Right ventricle myocardium inferior (tissue), 1 donor: ENCODE measurements at regions of chr19 and their contacts with region 1.

Region 1: DNA sequence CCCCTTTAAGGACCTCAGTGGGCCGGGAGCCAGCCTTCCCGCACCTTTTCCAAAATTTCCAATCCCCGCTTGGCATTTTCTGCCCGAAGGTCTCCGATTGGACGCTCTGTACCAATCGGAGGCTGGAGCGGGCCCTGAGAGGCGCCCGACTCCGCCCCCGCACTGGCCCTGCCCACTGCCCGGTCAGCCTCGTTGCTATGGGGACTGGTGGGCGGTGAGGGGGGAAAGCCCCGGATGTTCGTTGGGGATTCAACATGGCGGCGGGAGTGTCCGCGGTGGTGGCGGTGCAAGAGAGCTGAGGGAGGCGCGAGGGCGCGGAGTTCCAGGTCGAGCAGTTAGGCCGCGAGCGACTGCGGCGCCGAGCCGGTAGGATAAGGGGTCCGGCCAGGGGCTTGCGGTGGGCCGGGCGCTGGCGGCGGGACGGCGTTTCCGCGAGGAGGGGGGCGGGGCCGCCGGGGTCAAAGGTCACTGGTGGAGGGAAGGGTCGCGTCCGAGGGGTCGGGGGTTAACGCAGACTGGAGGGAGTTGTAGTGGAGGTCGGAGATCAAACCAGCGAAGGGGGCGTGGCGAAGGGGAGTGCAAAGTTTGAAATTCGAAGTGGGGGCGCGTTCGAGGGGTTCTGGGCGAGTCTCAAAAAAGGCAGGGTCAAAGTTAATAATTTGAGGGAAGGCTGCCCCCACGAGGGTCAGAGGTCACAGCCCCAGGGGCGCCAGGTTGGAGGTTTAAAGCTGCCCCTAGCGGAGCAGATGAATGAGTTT is at the start of gene PAK4:
- DNase-seq: peak; percentile 98
- ATAC-seq: peak; percentile 100
- total RNA-seq, gene PAK4: 16.2 TPM

Region 2: DNA sequence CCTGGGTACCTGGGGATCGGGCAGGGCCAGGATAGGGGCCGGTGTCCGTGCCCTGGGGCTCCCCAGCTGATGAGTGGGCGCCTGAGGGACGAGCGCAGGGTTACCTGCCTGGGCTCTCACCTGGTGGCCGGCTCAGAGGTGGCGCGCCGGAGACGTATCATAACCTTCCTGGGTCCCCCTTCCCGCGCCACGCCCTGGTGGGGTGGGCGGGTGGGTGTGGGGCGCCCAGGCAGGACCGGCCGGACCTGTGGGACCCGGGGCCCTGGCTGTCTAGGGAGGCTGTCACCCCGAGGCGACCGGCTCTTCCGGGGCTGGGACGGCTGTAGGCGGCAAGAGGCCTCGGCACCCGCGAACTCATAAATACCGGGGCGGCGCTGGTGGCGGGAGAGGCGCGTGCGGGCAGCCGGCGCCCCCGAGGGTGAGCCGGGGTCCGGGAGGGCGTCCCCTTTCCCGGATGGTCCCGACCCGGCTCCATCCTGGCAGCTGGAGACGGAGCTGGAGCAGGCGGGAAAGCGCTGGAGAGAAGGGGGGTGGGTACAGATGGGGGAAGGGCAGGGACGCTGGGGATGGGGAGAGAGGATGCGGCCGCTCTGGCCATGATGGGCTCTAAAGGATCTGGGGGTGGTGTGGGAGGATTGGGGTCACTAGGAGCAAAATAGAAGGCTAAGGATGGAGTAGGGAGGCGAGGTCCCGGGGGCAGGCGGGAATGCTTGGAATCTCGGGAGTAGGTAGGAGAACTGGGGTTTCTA is 41.6 kb before region 1 on chr19 and contains the start of gene ACP7:
- intact Hi-C with region 1: no loop called
- DNase-seq: no peak
- ATAC-seq: no peak
- total RNA-seq, gene ACP7: not detected

Region 3: DNA sequence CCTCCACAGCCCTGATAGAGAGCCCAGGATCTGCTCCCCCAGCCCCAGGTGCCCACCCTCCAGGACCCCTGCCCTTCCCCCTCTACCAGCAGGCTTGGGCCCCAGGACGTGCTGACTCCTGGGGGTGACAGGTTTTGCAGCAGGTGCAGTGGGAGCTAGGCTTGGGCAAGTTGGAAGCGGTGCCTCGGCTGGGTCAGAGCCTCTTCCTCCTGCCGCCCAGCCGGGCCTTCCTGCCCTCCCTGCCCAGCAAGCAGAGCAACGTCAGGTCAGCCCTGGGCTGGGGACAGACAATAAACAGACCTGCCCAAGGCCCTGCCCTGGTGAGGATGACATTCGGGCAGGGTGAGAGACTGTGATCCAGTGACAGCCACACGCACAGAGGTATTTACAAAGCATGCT is 61.8 kb after region 1 on chr19:
- intact Hi-C with region 1: loop called (anchors 1 kb)
- DNase-seq: no peak
- ATAC-seq: no peak

Region 4: DNA sequence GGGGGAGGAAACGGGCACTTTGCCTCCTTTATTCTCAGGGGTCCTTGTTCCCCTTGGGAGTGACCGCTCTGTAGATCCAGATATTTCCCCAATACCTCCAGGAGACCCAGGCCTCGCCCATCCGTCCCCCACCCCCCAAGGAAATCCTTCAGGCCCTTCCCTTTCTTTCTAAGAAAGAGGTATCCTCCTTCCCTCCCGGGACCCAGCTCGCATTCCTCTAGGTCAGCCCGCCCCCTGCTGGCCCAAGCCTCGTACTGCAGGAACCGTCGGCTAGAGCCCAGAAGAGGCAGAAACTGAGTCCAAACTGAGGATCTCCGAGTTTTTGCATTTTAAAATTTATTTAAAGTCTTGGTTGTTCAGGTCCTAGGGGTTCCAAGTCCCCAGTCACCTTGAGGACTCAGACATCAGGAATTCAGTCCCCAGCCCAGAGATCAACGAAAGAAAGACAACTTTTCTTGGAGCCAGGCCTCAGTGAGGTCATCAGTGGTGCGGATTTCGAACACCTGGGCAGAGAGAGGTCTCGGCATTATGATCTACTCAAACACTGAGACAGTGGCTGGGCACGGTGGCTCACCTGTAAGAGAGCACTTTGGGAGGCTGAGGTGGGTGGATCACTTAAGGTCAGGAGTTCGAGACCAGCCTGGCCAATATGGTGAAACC is 202.4 kb after region 1 on chr19:
- intact Hi-C with region 1: loop called (anchors 1 kb)
- DNase-seq: peak; percentile 96
- ATAC-seq: peak; percentile 59

Region 5: DNA sequence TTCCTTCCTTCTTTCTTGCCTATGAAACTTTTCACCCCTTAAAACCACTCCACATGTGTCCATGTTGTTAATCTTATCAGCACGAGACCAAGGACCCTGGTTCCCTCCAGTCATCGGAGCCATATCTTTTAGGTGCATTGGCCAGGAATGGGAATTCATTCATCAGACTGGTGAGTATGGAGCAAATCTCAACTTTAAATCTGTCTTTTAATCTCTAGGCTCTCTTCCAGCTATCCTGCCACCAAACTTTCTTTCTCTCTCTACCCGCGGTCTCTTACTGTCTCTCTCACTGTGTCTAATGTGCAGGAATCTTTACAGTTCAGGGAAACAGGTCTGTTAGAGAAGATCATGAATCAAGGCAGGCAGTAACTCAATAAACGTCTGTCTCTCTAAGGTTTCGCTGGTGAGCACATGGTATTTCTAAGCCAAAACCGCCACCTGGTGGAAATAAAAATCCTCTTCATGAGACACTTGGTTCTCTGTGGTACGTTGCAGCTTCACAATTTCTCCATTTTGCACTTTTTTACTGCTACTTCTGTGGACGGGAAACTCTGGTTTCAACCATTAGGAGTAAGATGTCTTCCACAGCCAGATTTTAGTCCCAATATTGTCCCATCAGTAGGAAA is 546.1 kb after region 1 on chr19:
- intact Hi-C with region 1: loop called (anchors 5 kb)
- DNase-seq: no peak
- ATAC-seq: no peak